ENCODE measurements at regions of chr5 and their contacts with region 1.

Region 1: DNA sequence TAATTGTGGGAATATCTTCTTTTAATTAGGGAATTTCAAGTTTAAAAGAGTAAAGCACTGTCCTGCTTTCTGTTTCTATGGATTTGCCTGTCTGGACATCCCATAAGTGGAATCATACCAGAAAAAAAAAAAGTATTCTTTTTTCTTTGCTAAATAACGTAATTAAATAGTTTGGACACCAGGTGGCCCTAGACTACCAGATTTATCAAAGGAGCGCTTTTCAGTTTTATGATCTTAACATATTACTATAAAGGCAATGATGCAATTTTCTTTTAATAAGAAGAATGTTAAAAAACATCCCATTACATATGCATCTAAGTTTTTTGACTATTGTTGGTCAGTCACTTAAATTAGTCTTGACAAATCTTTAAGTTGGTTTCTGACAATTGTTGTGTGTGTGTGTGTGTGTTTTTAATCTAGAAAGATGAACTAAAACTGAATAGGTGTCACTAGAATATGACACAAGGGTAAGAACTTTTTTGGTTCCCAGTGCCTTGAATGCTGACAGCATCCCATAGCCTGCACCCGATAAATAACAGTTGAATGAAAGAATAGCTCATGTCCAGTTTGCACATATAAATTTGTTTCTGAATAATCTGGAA is 49.5 kb downstream of the C5orf22 start:
- DNase-seq: no peak
- ATAC-seq: peak in 1 of 4 donors; percentile 39
- H3K4me3 ChIP-seq: no peak overlapping the region
- H3K27ac ChIP-seq: no peak overlapping the region
- H3K4me1 ChIP-seq: no peaks in the 10 kb centered on the region
- H3K27me3 ChIP-seq: no peaks in the 10 kb centered on the region
- CTCF ChIP-seq: peak; percentile 39 to 79 (median 63)
- POLR2A ChIP-seq: no peak

Region 2: GRCh38 chr5:31680528-31680927 is 98.9 kb after region 1 on chr5:
- intact Hi-C with region 1: loop called in 1 of 10 experiments (anchors 10 kb)
- DNase-seq: peak; percentile 72 to 88 (median 80)
- ATAC-seq: peak; percentile 66 to 87 (median 78)
- H3K4me3 ChIP-seq: no peak overlapping the region
- H3K27ac ChIP-seq: peak overlapping the region in 10 of 12 donors; percentile 24 to 75 (median 57)
- H3K4me1 ChIP-seq: peaks cover 0 to 45% (median 7%) of the 10 kb centered on the region in 12 donors
- H3K27me3 ChIP-seq: no peaks in the 10 kb centered on the region
- CTCF ChIP-seq: peak in 3 of 12 donors; percentile 2 to 16 (median 13)
- POLR2A ChIP-seq: no peak

Region 3: GRCh38 chr5:31809050-31809870 is 227.7 kb after region 1 on chr5:
- intact Hi-C with region 1: loop called (anchors 1 to 5 kb)
- DNase-seq: peak; percentile 71 to 83 (median 74)
- ATAC-seq: peak; percentile 84 to 94 (median 90)
- H3K4me3 ChIP-seq: no peak overlapping the region
- H3K27ac ChIP-seq: no peak overlapping the region
- H3K4me1 ChIP-seq: peaks cover 0 to 22% (median 2%) of the 10 kb centered on the region in 12 donors
- H3K27me3 ChIP-seq: no peaks in the 10 kb centered on the region
- CTCF ChIP-seq: peak; percentile 67 to 89 (median 80)
- POLR2A ChIP-seq: no peak

Region 4: GRCh38 chr5:32092938-32093812 is 511.6 kb after region 1 on chr5:
- intact Hi-C with region 1: loop called in 7 of 10 experiments (anchors 5 to 10 kb)
- DNase-seq: peak in 4 of 5 donors; percentile 55 to 66 (median 60)
- ATAC-seq: peak; percentile 59 to 82 (median 79)
- H3K4me3 ChIP-seq: no peak overlapping the region
- H3K27ac ChIP-seq: no peak overlapping the region
- H3K4me1 ChIP-seq: peaks cover 0 to 26% (median 11%) of the 10 kb centered on the region in 12 donors
- H3K27me3 ChIP-seq: no peaks in the 10 kb centered on the region
- CTCF ChIP-seq: peak; percentile 53 to 80 (median 74)
- POLR2A ChIP-seq: no peak